ENCODE measurements at regions of chrX and their contacts with region 1.

Region 1: GRCh38 chrX:123833387-123833786 is 26.5 kb upstream of the XIAP start:
- DNase-seq: peak; percentile 33
- ATAC-seq: peak; percentile 93
- H3K4me3 ChIP-seq: no peak overlapping the region
- H3K27ac ChIP-seq: no peak overlapping the region
- H3K4me1 ChIP-seq: no peaks in the 10 kb centered on the region; the same call in 1 of the 2 replicates
- H3K27me3 ChIP-seq: no peaks in the 10 kb centered on the region
- CTCF ChIP-seq: peak; percentile 75 to 80 (median 76)
- EP300 ChIP-seq: no peak
- POLR2A ChIP-seq: no peak
- RAD21 ChIP-seq: peak; percentile 92

Region 2: GRCh38 chrX:123753656-123754350 is 79.6 kb before region 1 on chrX:
- CTCF ChIA-PET with region 1: no interaction called
- POLR2A ChIA-PET with region 1: no interaction called
- RAD21 ChIA-PET with region 1: no interaction called
- SMC1A ChIA-PET with region 1: no interaction called
- in situ Hi-C with region 1: no loop called
- intact Hi-C with region 1: no loop called
- DNase-seq: no peak
- ATAC-seq: peak; percentile 28
- H3K4me3 ChIP-seq: no peak overlapping the region
- H3K27ac ChIP-seq: no peak overlapping the region
- H3K4me1 ChIP-seq: peaks cover 8% of the 10 kb centered on the region
- H3K27me3 ChIP-seq: no peaks in the 10 kb centered on the region
- CTCF ChIP-seq: no peak
- EP300 ChIP-seq: no peak
- POLR2A ChIP-seq: no peak
- RAD21 ChIP-seq: no peak

Region 3: GRCh38 chrX:123771449-123772064 is 61.8 kb before region 1 on chrX:
- CTCF ChIA-PET with region 1: interaction called, 22 read pairs
- POLR2A ChIA-PET with region 1: no interaction called
- RAD21 ChIA-PET with region 1: interaction called, 5 read pairs
- SMC1A ChIA-PET with region 1: interaction called, 14 read pairs
- in situ Hi-C with region 1: no loop called
- intact Hi-C with region 1: no loop called
- DNase-seq: no peak
- ATAC-seq: peak; percentile 75
- H3K4me3 ChIP-seq: no peak overlapping the region
- H3K27ac ChIP-seq: no peak overlapping the region
- H3K4me1 ChIP-seq: no peaks in the 10 kb centered on the region
- H3K27me3 ChIP-seq: no peaks in the 10 kb centered on the region
- CTCF ChIP-seq: no peak
- EP300 ChIP-seq: no peak
- POLR2A ChIP-seq: no peak
- RAD21 ChIP-seq: no peak

Region 4: GRCh38 chrX:123779908-123780396 is 53.4 kb before region 1 on chrX:
- CTCF ChIA-PET with region 1: interaction called, 22 read pairs
- POLR2A ChIA-PET with region 1: no interaction called
- RAD21 ChIA-PET with region 1: interaction called, 15 read pairs
- SMC1A ChIA-PET with region 1: interaction called, 14 read pairs
- in situ Hi-C with region 1: no loop called
- intact Hi-C with region 1: no loop called
- DNase-seq: no peak
- ATAC-seq: no peak
- H3K4me3 ChIP-seq: no peak overlapping the region
- H3K27ac ChIP-seq: no peak overlapping the region
- H3K4me1 ChIP-seq: no peaks in the 10 kb centered on the region
- H3K27me3 ChIP-seq: no peaks in the 10 kb centered on the region
- CTCF ChIP-seq: no peak
- EP300 ChIP-seq: no peak
- POLR2A ChIP-seq: no peak
- RAD21 ChIP-seq: no peak

Region 5: DNA sequence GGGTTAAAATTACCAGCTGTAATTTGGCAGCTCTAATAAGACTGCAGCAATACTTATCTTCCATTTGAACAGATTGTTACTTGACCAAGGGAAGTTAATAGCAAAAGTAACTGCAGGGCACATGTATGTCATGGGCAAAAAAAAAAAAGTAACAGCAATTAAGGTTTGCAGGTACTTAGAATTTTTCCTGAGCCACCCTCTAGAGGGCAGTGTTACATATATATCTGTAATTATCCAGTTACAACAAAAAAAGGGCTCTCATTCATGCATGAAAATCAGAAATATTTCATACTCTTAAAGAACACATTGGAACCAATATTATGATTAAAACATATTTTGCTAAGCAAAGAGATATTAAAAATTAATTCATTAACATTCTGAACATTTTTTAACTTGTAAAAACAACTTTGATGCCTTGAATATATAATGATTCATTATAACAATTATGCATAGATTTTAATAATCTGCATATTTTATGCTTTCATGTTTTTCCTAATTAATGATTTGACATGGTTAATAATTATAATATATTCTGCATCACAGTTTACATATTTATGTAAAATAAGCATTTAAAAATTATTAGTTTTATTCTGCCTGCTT is 51.5 kb after region 1 on chrX:
- CTCF ChIA-PET with region 1: interaction called, 19 read pairs
- POLR2A ChIA-PET with region 1: no interaction called
- RAD21 ChIA-PET with region 1: interaction called, 7 read pairs
- SMC1A ChIA-PET with region 1: interaction called, 17 read pairs
- in situ Hi-C with region 1: no loop called
- intact Hi-C with region 1: loop called (anchors 5 kb)
- DNase-seq: no peak
- ATAC-seq: peak; percentile 73
- H3K4me3 ChIP-seq: no peak overlapping the region
- H3K27ac ChIP-seq: no peak overlapping the region
- H3K4me1 ChIP-seq: no peaks in the 10 kb centered on the region
- H3K27me3 ChIP-seq: no peaks in the 10 kb centered on the region
- CTCF ChIP-seq: peak; percentile 47 to 58 (median 53)
- EP300 ChIP-seq: no peak
- POLR2A ChIP-seq: no peak
- RAD21 ChIP-seq: 0 out of 2 replicates have a peak, but pooled peaks have one; percentile 26

Region 6: GRCh38 chrX:123960042-123960611 is 126.7 kb after region 1 on chrX:
- CTCF ChIA-PET with region 1: interaction called, 40 read pairs
- POLR2A ChIA-PET with region 1: no interaction called
- RAD21 ChIA-PET with region 1: interaction called, 27 read pairs
- SMC1A ChIA-PET with region 1: interaction called, 31 read pairs
- in situ Hi-C with region 1: loop called (anchors 10 kb)
- intact Hi-C with region 1: loop called (anchors 1 kb)
- DNase-seq: peak; percentile 69
- ATAC-seq: peak; percentile 82
- H3K4me3 ChIP-seq: peak overlapping the region; percentile 70
- H3K27ac ChIP-seq: peak overlapping the region; percentile 89
- H3K4me1 ChIP-seq: no peaks in the 10 kb centered on the region
- H3K27me3 ChIP-seq: no peaks in the 10 kb centered on the region
- CTCF ChIP-seq: peak; percentile 77 to 98 (median 91)
- EP300 ChIP-seq: no peak
- POLR2A ChIP-seq: peak; percentile 70; the same call in 1 of the 2 replicates
- RAD21 ChIP-seq: peak; percentile 76

Region 7: GRCh38 chrX:124023838-124024238 is 190.5 kb after region 1 on chrX:
- CTCF ChIA-PET with region 1: interaction called, 6 read pairs
- POLR2A ChIA-PET with region 1: no interaction called
- RAD21 ChIA-PET with region 1: interaction called, 3 read pairs
- SMC1A ChIA-PET with region 1: no interaction called
- in situ Hi-C with region 1: no loop called
- intact Hi-C with region 1: loop called (anchors 5 kb)
- DNase-seq: no peak
- ATAC-seq: no peak
- H3K4me3 ChIP-seq: no peak overlapping the region
- H3K27ac ChIP-seq: no peak overlapping the region
- H3K4me1 ChIP-seq: no peaks in the 10 kb centered on the region
- H3K27me3 ChIP-seq: no peaks in the 10 kb centered on the region
- CTCF ChIP-seq: no peak
- EP300 ChIP-seq: no peak
- POLR2A ChIP-seq: no peak
- RAD21 ChIP-seq: no peak

Region 8: GRCh38 chrX:124098089-124098488 is 264.7 kb after region 1 on chrX:
- CTCF ChIA-PET with region 1: interaction called, 5 read pairs
- POLR2A ChIA-PET with region 1: no interaction called
- RAD21 ChIA-PET with region 1: no interaction called
- SMC1A ChIA-PET with region 1: no interaction called
- in situ Hi-C with region 1: no loop called
- intact Hi-C with region 1: loop called (anchors 10 kb)
- DNase-seq: no peak
- ATAC-seq: peak; percentile 65
- H3K4me3 ChIP-seq: no peak overlapping the region
- H3K27ac ChIP-seq: no peak overlapping the region
- H3K4me1 ChIP-seq: no peaks in the 10 kb centered on the region
- H3K27me3 ChIP-seq: no peaks in the 10 kb centered on the region
- CTCF ChIP-seq: peak; percentile 36 to 50 (median 42); a peak in 4 of 6 replicates
- EP300 ChIP-seq: no peak
- POLR2A ChIP-seq: no peak
- RAD21 ChIP-seq: peak; percentile 47

Measured in GM12878 (cell line).